ENCODE measurements at regions of chr17 and their contacts with region 1.

Region 1: DNA sequence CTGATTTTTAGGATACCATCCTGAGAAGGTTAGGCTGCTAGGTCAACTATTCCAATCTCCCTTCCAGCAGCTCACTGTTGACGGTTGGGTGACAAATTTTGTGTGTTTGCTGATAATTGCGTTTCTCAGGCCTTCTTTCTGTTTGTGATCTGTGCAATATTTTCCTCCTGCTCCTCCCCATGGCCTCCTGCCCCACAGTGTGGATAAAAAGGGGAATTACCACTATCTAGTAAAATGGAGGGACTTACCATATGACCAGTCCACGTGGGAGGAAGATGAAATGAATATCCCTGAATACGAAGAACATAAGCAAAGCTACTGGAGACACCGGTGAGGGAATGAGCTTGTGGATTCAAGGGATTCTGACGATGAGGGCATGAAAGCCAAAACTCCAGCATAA is 9.2 kb downstream of the CHD3 start:
- DNase-seq: peak in 7 of 35 experiments; percentile 7 to 55 (median 13)
- ATAC-seq: peak in 2 of 4 experiments; percentile 46 to 69
- H3K4me3 ChIP-seq: no peak overlapping the region
- H3K4me3 Mint-ChIP-seq: no peak overlapping the region
- H3K27ac ChIP-seq: no peak overlapping the region
- H3K27ac Mint-ChIP-seq: peak overlapping the region; percentile 53 to 71
- H3K4me1 ChIP-seq: no peaks in the 10 kb centered on the region
- H3K4me1 Mint-ChIP-seq: peaks cover 6 to 11% (median 7%) of the 10 kb centered on the region in 3 donors
- H3K27me3 ChIP-seq: no peaks in the 10 kb centered on the region
- H3K27me3 Mint-ChIP-seq: no peaks in the 10 kb centered on the region

Region 2: GRCh38 chr17:7179317-7180254 is 718.2 kb before region 1 on chr17 and contains the start of gene ASGR1:
- CTCF ChIA-PET with region 1: interaction called in 1 of 2 experiments, 14 read pairs
- POLR2A ChIA-PET with region 1: no interaction called
- DNase-seq: no peak
- ATAC-seq: no peak
- H3K4me3 ChIP-seq: no peak within 1 kb of the TSS
- H3K4me3 Mint-ChIP-seq: peak within 1 kb of the TSS in 1 of 3 donors; percentile 70
- H3K27ac ChIP-seq: no peak within 1 kb of the TSS
- H3K27ac Mint-ChIP-seq: peak within 1 kb of the TSS in 1 of 2 donors; percentile 9
- H3K4me1 ChIP-seq: peaks cover 8 to 20% of the 10 kb centered on the region in 2 experiments
- H3K4me1 Mint-ChIP-seq: peaks cover 9 to 12% (median 11%) of the 10 kb centered on the region in 3 donors
- H3K27me3 ChIP-seq: peaks cover 10 to 52% of the 10 kb centered on the region in 2 experiments
- H3K27me3 Mint-ChIP-seq: peaks cover 6 to 14% of the 10 kb centered on the region in 2 donors
- total RNA-seq, gene ASGR1: 0.60 to 1.8 (median 0.82) TPM

Region 3: GRCh38 chr17:7523033-7523432 is 374.7 kb before region 1 on chr17:
- CTCF ChIA-PET with region 1: no interaction called
- POLR2A ChIA-PET with region 1: no interaction called
- DNase-seq: peak in 30 of 35 experiments; percentile 14 to 75 (median 40)
- ATAC-seq: peak in 3 of 4 experiments; percentile 52 to 78 (median 53)
- H3K4me3 ChIP-seq: no peak overlapping the region
- H3K4me3 Mint-ChIP-seq: no peak overlapping the region
- H3K27ac ChIP-seq: no peak overlapping the region
- H3K27ac Mint-ChIP-seq: peak overlapping the region in 1 of 2 donors; percentile 69
- H3K4me1 ChIP-seq: peaks cover 0 to 6% of the 10 kb centered on the region in 2 experiments
- H3K4me1 Mint-ChIP-seq: peaks cover 3 to 6% (median 4%) of the 10 kb centered on the region in 3 donors
- H3K27me3 ChIP-seq: no peaks in the 10 kb centered on the region
- H3K27me3 Mint-ChIP-seq: no peaks in the 10 kb centered on the region

Region 4: DNA sequence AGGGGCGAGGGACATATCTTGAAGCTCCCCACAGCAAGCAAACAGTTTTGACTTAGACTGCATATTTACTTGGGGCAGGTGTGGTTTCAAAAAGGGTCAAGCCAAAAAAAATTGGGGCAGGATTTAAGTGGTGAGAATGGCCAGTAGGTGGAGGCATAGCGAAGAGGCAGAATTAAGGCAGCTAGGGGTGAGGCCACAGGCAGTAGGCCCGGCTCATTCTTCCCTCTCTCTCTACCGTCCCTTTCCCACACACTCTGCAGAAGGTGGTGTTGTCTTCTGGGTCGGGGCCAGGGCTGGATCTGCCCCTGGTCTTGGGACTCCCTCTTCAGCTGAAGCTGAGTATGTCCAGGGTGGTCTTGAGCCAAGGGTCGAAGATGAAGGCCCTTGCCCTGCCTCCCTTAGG is 265.3 kb before region 1 on chr17:
- CTCF ChIA-PET with region 1: no interaction called
- POLR2A ChIA-PET with region 1: no interaction called
- DNase-seq: peak in 4 of 35 experiments; percentile 9 to 55 (median 16)
- ATAC-seq: peak in 2 of 4 experiments; percentile 18 to 19
- H3K4me3 ChIP-seq: no peak overlapping the region
- H3K4me3 Mint-ChIP-seq: no peak overlapping the region
- H3K27ac ChIP-seq: no peak overlapping the region
- H3K27ac Mint-ChIP-seq: no peak overlapping the region
- H3K4me1 ChIP-seq: peaks cover 2 to 10% of the 10 kb centered on the region in 2 experiments
- H3K4me1 Mint-ChIP-seq: peaks cover 2 to 6% (median 5%) of the 10 kb centered on the region in 3 donors
- H3K27me3 ChIP-seq: peaks cover 0 to 4% of the 10 kb centered on the region in 2 experiments
- H3K27me3 Mint-ChIP-seq: peaks cover 0 to 2% of the 10 kb centered on the region in 2 donors

Region 5: GRCh38 chr17:7956228-7956965 is 58.6 kb after region 1 on chr17:
- CTCF ChIA-PET with region 1: no interaction called
- POLR2A ChIA-PET with region 1: no interaction called
- DNase-seq: no peak
- ATAC-seq: no peak
- H3K4me3 ChIP-seq: no peak overlapping the region
- H3K4me3 Mint-ChIP-seq: no peak overlapping the region
- H3K27ac ChIP-seq: no peak overlapping the region
- H3K27ac Mint-ChIP-seq: no peak overlapping the region
- H3K4me1 ChIP-seq: no peaks in the 10 kb centered on the region
- H3K4me1 Mint-ChIP-seq: peaks cover 0 to 2% (median 2%) of the 10 kb centered on the region in 3 donors
- H3K27me3 ChIP-seq: peaks cover 0 to 9% of the 10 kb centered on the region in 2 experiments
- H3K27me3 Mint-ChIP-seq: peaks cover 5% of the 10 kb centered on the region in 2 donors

Measured in T-cell (primary cell).